Testis (tissue), 5 donors: ENCODE measurements at regions of chr17 and their contacts with region 1.

Region 1: GRCh38 chr17:82384730-82385481 is 13.3 kb downstream of the UTS2R start:
- DNase-seq: peak; percentile 73
- H3K4me3 ChIP-seq: no peak overlapping the region
- H3K27ac ChIP-seq: no peak overlapping the region
- H3K4me1 ChIP-seq: peaks cover 16% of the 10 kb centered on the region
- H3K27me3 ChIP-seq: no peaks in the 10 kb centered on the region
- CTCF ChIP-seq: no peak
- POLR2A ChIP-seq: no peak

Region 2: GRCh38 chr17:83012868-83013778 is 628.2 kb after region 1 on chr17:
- intact Hi-C with region 1: loop called (anchors 5 kb)
- DNase-seq: no peak
- H3K4me3 ChIP-seq: no peak overlapping the region
- H3K27ac ChIP-seq: no peak overlapping the region
- H3K4me1 ChIP-seq: no peaks in the 10 kb centered on the region
- H3K27me3 ChIP-seq: no peaks in the 10 kb centered on the region
- CTCF ChIP-seq: no peak
- POLR2A ChIP-seq: no peak